Heart right ventricle (tissue), 16 donors: ENCODE measurements at regions of chr5 and their contacts with region 1.

Region 1: GRCh38 chr5:80191991-80192398 is 63.9 kb downstream of the SERINC5 start:
- DNase-seq: peak; percentile 58 to 65
- ATAC-seq: peak; percentile 46 to 71 (median 66)
- H3K4me3 ChIP-seq: peak overlapping the region in 3 of 10 donors; percentile 6 to 16 (median 16)
- H3K27ac ChIP-seq: peak overlapping the region; percentile 57 to 87 (median 78)
- H3K4me1 ChIP-seq: peaks cover 29 to 75% (median 62%) of the 10 kb centered on the region in 9 donors
- H3K27me3 ChIP-seq: no peaks in the 10 kb centered on the region
- CTCF ChIP-seq: no peak

Region 2: DNA sequence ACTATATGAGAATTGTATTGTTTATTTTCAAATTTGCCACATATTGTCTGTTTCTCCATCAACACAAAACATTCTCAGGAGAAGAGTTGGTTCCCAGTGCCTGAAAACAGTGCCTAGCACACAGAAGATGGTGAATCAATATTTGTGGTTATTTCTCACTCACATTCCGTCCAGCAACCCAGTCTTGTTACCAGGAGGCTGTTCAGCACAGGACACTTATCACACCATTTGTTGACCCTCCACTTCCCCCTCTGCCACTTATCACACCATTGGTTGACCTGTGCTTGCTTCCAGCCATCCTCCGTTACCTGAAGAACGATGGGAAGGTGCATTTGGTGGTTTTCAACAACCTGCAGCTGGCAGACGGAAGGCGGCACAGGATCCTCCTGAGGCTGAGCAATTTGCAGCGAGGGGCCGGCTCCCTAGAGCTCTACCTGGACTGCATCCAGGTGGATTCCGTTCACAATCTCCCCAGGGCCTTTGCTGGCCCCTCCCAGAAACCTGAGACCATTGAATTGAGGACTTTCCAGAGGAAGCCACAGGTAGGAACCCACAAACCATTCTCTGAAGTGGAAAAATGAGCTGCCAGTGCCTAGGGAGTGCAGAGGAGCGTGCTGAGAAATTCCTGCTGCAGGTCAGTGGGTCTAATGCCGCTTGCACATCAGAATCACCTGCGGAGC is 136.4 kb before region 1 on chr5:
- intact Hi-C with region 1: no loop called
- DNase-seq: no peak
- ATAC-seq: no peak
- H3K4me3 ChIP-seq: no peak overlapping the region
- H3K27ac ChIP-seq: no peak overlapping the region
- H3K4me1 ChIP-seq: peaks cover 0 to 10% (median 0%) of the 10 kb centered on the region in 9 donors
- H3K27me3 ChIP-seq: no peaks in the 10 kb centered on the region
- CTCF ChIP-seq: no peak

Region 3: GRCh38 chr5:80141147-80141671 is 50.8 kb before region 1 on chr5:
- intact Hi-C with region 1: loop called in 2 of 10 experiments (anchors 2 to 5 kb)
- DNase-seq: peak; percentile 82 to 89
- ATAC-seq: peak; percentile 93 to 97 (median 96)
- H3K4me3 ChIP-seq: no peak overlapping the region
- H3K27ac ChIP-seq: peak overlapping the region; percentile 62 to 89 (median 86)
- H3K4me1 ChIP-seq: peaks cover 0 to 79% (median 23%) of the 10 kb centered on the region in 9 donors
- H3K27me3 ChIP-seq: no peaks in the 10 kb centered on the region
- CTCF ChIP-seq: peak in 3 of 9 donors; percentile 9 to 20 (median 15)

Region 4: DNA sequence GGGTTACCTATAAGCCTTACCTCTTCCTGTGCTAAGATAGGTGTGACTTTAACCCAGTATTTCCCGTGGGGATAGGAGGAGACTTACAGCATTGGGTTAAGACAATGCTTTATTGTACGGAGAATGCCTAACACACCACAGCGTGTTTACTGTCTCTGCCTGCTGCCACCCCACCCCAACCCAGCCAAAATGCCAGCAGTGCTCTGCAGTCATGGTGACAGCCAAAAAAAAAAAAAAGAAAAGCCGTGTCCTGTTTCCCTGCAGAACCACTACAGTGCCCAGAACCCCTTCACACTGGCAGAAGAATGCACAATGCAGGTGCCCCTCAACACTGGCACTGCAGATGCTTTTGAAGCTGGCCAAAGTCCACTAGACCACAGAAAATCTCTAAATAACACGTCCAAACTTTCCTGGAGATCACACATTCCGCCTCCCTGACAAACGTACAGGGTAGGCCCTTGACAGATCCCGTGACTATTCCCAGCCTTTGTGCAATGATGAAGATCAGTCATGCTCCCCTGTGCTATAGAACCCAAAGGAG is 38.3 kb before region 1 on chr5:
- intact Hi-C with region 1: loop called in 1 of 10 experiments (anchors 5 kb)
- DNase-seq: no peak
- ATAC-seq: peak; percentile 6 to 75 (median 68)
- H3K4me3 ChIP-seq: no peak overlapping the region
- H3K27ac ChIP-seq: peak overlapping the region in 9 of 10 donors; percentile 13 to 68 (median 48)
- H3K4me1 ChIP-seq: peaks cover 0 to 24% (median 10%) of the 10 kb centered on the region in 9 donors
- H3K27me3 ChIP-seq: no peaks in the 10 kb centered on the region
- CTCF ChIP-seq: no peak

Region 5: GRCh38 chr5:80204808-80205614 is 13.0 kb after region 1 on chr5:
- intact Hi-C with region 1: loop called in 1 of 10 experiments (anchors 1 kb)
- DNase-seq: peak in 1 of 2 donors; percentile 36
- ATAC-seq: peak; percentile 56 to 74 (median 62)
- H3K4me3 ChIP-seq: no peak overlapping the region
- H3K27ac ChIP-seq: peak overlapping the region in 9 of 10 donors; percentile 10 to 64 (median 61)
- H3K4me1 ChIP-seq: peaks cover 9 to 61% (median 45%) of the 10 kb centered on the region in 9 donors
- H3K27me3 ChIP-seq: no peaks in the 10 kb centered on the region
- CTCF ChIP-seq: no peak

Region 6: GRCh38 chr5:80238778-80239679 is 47.0 kb after region 1 on chr5:
- intact Hi-C with region 1: loop called in 1 of 10 experiments (anchors 5 kb)
- DNase-seq: peak; percentile 57 to 78
- ATAC-seq: peak; percentile 42 to 82 (median 72)
- H3K4me3 ChIP-seq: peak overlapping the region in 1 of 10 donors; percentile 4
- H3K27ac ChIP-seq: peak overlapping the region in 9 of 10 donors; percentile 1 to 76 (median 41)
- H3K4me1 ChIP-seq: peaks cover 5 to 42% (median 30%) of the 10 kb centered on the region in 9 donors
- H3K27me3 ChIP-seq: no peaks in the 10 kb centered on the region
- CTCF ChIP-seq: no peak